Kidney (tissue), 22 donors: ENCODE measurements at regions of chr4 and their contacts with region 1.

Region 1: GRCh38 chr4:1890979-1891570 is 19.9 kb downstream of the NSD2 start:
- DNase-seq: no peak
- H3K4me3 ChIP-seq: no peak overlapping the region
- H3K27ac ChIP-seq: no peak overlapping the region
- H3K4me1 ChIP-seq: no peaks in the 10 kb centered on the region
- H3K27me3 ChIP-seq: no peaks in the 10 kb centered on the region
- CTCF ChIP-seq: no peak

Region 2: GRCh38 chr4:1746265-1746691 is 144.8 kb before region 1 on chr4:
- intact Hi-C with region 1: loop called (anchors 5 kb)
- DNase-seq: peak in 4 of 5 donors; percentile 88 to 93 (median 88)
- H3K4me3 ChIP-seq: no peak overlapping the region
- H3K27ac ChIP-seq: no peak overlapping the region
- H3K4me1 ChIP-seq: peaks cover 0 to 3% (median 0%) of the 10 kb centered on the region in 3 donors
- H3K27me3 ChIP-seq: no peaks in the 10 kb centered on the region
- CTCF ChIP-seq: peak; percentile 72